ENCODE measurements at regions of chr19 and their contacts with region 1.

Region 1: GRCh38 chr19:13880059-13881043 is 3.4 kb downstream of the NANOS3 start:
- DNase-seq: peak; percentile 99
- ATAC-seq: peak; percentile 98 to 100 (median 98)
- H3K4me3 ChIP-seq: peak overlapping the region; percentile 53
- H3K27ac ChIP-seq: peak overlapping the region; percentile 83
- H3K4me1 ChIP-seq: peaks cover 15% of the 10 kb centered on the region
- H3K27me3 ChIP-seq: no peaks in the 10 kb centered on the region
- CTCF ChIP-seq: peak; percentile 98

Region 2: GRCh38 chr19:13917888-13918406 is 37.6 kb after region 1 on chr19:
- intact Hi-C with region 1: no loop called
- DNase-seq: no peak
- ATAC-seq: no peak
- H3K4me3 ChIP-seq: no peak overlapping the region
- H3K27ac ChIP-seq: no peak overlapping the region
- H3K4me1 ChIP-seq: no peaks in the 10 kb centered on the region
- H3K27me3 ChIP-seq: no peaks in the 10 kb centered on the region
- CTCF ChIP-seq: no peak

Region 3: DNA sequence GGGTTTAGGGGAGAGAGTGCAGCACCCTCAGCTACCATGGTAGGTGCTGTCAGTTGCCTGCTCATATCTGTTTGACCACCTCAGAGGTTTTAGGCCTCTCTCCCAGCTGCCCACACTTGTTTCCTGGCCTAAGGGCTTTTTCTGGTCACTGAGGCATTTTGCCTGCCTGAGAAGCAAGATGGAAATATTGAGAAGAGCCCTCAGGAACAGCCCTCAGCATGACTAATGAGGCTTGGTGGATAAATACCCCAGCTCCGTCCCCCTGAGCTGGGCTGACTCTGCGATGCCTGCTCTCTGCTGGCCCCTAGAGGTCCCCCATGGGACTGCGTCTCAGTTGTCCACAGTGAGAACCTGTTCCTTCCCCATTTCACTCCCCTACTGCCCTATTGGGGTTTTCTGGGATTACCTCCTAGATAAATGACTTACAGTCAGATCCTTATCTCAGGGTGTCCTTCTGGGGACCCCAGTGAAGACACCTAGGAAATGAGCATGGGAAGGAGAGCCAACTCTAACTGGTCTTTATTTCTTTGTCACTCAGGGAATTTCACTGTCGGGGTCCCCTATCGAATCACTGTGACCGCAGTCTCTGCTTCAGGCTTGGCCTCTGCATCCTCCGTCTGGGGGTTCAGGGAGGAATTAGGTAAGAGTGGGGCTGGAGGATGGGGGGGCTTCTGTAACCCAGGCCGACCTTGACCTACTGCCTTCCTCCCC is 168.2 kb after region 1 on chr19:
- intact Hi-C with region 1: loop called in 1 of 2 experiments (anchors 2 kb)
- DNase-seq: peak; percentile 41 to 72
- ATAC-seq: peak in 3 of 4 donors; percentile 77 to 80 (median 77)
- H3K4me3 ChIP-seq: no peak overlapping the region
- H3K27ac ChIP-seq: no peak overlapping the region
- H3K4me1 ChIP-seq: no peaks in the 10 kb centered on the region
- H3K27me3 ChIP-seq: no peaks in the 10 kb centered on the region
- CTCF ChIP-seq: peak; percentile 77

Measured in psoas muscle (tissue), 8 donors.